ENCODE measurements at regions of chr2 and their contacts with region 1.

Region 1: DNA sequence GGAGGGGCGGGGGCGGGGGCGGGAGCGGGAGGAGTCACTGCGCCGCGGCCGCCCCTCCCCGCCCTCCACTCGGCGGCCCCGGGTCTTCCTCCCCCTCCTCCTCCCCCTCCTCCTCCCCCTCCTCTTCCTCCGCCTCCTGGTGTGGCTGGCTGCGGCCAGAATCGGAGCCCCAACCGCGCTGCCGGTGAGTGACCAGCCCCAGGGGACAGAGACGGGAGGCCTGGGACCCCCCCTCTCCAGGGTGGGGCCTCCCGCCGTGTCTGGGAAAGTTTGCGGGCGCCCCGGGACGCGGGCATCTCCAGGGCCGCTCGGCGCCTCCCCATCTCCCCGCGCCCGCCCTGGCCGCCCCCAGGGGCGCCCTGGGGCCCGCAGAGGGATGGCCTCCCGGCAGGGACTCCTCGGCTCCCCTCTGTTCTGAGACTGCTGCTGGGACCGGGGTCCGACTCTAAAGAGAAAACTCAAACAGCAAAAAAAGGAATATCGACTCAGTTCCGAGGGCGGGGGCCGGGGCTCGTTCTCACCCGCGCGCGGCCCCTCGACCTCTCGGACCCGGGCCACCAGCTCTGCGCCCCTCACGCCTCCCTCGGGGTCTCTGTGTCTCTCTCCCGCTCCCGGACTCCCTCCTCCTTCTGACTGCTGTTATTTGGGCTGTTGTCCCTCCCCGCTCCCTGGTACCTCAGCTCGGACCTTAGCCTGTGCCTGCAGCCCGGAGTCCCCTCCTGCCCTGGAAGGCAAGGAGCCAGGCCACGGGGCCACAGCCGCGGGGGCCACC is at the start of gene STON1:
- DNase-seq: peak; percentile 88
- H3K4me3 ChIP-seq: peak within 1 kb of the TSS; percentile 71 to 99 (median 84)
- H3K27ac ChIP-seq: peak within 1 kb of the TSS; percentile 93 to 98 (median 96)
- H3K4me1 ChIP-seq: peaks cover 0 to 76% (median 67%) of the 10 kb centered on the region in 4 donors
- H3K27me3 ChIP-seq: no peaks in the 10 kb centered on the region
- CTCF ChIP-seq: peak in 1 of 4 experiments; percentile 24
- EP300 ChIP-seq: no peak
- POLR2A ChIP-seq: peak in 1 of 2 donors; percentile 55
- total RNA-seq, gene STON1: 121 to 218 (median 188) TPM

Region 2: DNA sequence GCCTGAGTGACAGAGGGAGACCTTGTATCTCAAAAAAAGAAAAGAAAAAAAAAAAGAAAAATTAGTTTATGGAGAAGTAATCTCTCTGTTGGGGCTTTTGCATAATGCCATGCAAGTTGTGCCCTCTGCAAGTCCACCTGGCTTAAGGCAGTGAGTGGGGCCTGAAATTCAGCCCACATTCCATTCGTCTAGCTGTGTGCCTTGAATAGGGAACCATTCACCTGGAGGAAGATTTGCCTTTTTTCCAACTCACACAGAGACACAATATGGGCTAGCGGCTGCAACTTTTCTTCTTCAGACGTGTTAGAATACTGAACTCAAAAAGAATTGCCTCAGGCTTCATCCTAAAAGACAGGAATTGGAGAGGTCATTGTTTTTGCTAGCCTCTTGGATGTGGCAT is 160.2 kb before region 1 on chr2:
- intact Hi-C with region 1: no loop called
- DNase-seq: no peak
- H3K4me3 ChIP-seq: no peak overlapping the region
- H3K27ac ChIP-seq: no peak overlapping the region
- H3K4me1 ChIP-seq: peaks cover 0 to 6% (median 0%) of the 10 kb centered on the region in 4 donors
- H3K27me3 ChIP-seq: no peaks in the 10 kb centered on the region
- CTCF ChIP-seq: no peak
- EP300 ChIP-seq: no peak
- POLR2A ChIP-seq: no peak

Region 3: GRCh38 chr2:48448274-48449061 is 81.8 kb before region 1 on chr2:
- intact Hi-C with region 1: no loop called
- DNase-seq: no peak
- H3K4me3 ChIP-seq: no peak overlapping the region
- H3K27ac ChIP-seq: peak overlapping the region; percentile 39 to 63 (median 50)
- H3K4me1 ChIP-seq: peaks cover 0 to 35% (median 26%) of the 10 kb centered on the region in 4 donors
- H3K27me3 ChIP-seq: no peaks in the 10 kb centered on the region
- CTCF ChIP-seq: no peak
- EP300 ChIP-seq: no peak
- POLR2A ChIP-seq: no peak

Region 4: GRCh38 chr2:48471048-48471474 is 59.2 kb before region 1 on chr2:
- intact Hi-C with region 1: loop called (anchors 2 kb)
- DNase-seq: no peak
- H3K4me3 ChIP-seq: no peak overlapping the region
- H3K27ac ChIP-seq: peak overlapping the region; percentile 70 to 91 (median 82)
- H3K4me1 ChIP-seq: peaks cover 0 to 52% (median 23%) of the 10 kb centered on the region in 4 donors
- H3K27me3 ChIP-seq: no peaks in the 10 kb centered on the region
- CTCF ChIP-seq: peak; percentile 54 to 82 (median 76)
- EP300 ChIP-seq: no peak
- POLR2A ChIP-seq: no peak

Region 5: DNA sequence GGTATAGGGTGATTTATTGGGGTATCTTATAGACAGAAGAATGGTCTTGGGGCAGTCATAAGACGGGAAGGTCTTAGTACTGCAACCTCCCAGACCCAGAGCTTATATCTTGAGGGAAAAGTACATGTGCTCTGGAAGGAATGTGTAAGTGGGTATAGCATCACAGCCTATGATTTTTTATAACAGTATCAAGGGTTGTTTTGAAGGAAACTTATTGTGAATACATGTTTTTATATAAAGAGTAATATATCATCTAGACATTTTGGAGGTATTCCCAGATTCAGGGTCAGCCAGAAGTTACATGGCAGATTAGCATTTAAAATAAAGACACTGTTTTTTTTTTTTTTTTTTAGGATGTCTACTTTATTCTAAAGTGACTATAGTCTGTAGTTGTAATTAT is 47.9 kb before region 1 on chr2:
- intact Hi-C with region 1: loop called (anchors 2 kb)
- DNase-seq: no peak
- H3K4me3 ChIP-seq: no peak overlapping the region
- H3K27ac ChIP-seq: peak overlapping the region; percentile 78 to 91 (median 88)
- H3K4me1 ChIP-seq: peaks cover 0 to 66% (median 53%) of the 10 kb centered on the region in 4 donors
- H3K27me3 ChIP-seq: no peaks in the 10 kb centered on the region
- CTCF ChIP-seq: no peak
- EP300 ChIP-seq: peak in 3 of 4 donors; percentile 60 to 85 (median 81)
- POLR2A ChIP-seq: no peak

Region 6: GRCh38 chr2:48589170-48589767 is 59.0 kb after region 1 on chr2:
- intact Hi-C with region 1: loop called (anchors 5 kb)
- DNase-seq: no peak
- H3K4me3 ChIP-seq: no peak overlapping the region
- H3K27ac ChIP-seq: peak overlapping the region in 2 of 4 donors; percentile 30 to 51
- H3K4me1 ChIP-seq: peaks cover 0 to 47% (median 38%) of the 10 kb centered on the region in 4 donors
- H3K27me3 ChIP-seq: no peaks in the 10 kb centered on the region
- CTCF ChIP-seq: peak; percentile 52 to 81 (median 66)
- EP300 ChIP-seq: no peak
- POLR2A ChIP-seq: no peak